ENCODE measurements at regions of chr10 and their contacts with region 1.

Region 1: DNA sequence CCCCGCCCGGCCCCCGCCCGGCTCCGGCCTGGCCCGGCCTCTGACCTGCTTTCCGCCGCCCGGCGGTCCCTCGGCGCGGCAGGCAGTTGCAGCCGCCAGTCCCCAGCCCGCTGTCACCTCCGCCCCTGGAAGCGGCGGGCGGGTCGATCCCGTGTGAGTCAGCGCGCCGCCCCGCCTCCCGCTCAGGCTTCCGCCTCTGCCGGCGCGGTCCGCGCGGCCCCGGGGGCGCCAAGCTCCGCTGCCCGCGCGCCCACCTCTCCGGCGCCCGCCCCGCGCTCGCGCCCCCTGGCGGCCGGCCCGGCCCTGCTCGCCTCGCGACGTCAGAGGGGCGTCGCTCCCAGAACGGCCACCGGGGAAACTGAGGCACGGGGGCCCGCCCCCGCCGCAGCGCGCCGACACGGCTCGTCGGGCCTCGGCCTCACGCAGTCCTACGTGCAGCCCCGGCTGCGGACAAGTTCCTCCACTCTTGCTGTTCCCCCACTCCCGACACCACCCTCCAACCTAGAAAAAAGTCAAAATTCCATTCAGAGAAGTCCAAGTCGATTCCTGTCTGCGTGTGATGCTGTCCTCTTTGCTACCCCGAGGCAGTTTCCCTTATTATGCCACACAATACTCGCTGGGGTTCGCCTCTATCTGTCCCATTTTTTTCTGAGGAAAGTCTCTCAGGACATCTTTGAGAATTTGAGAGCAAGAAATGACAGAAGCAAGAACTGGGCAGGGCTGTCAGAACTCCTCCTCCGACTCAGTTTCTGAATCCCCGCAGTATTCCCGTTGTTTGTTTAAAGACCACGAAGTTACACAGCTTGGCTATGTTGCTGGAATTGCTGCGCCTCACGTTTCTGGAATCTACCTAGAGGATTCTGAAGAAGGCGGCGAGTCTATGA is at the start of gene DNMBP:
- DNase-seq: peak; percentile 76
- H3K4me3 Mint-ChIP-seq: peak within 1 kb of the TSS; percentile 94
- H3K27ac Mint-ChIP-seq: peak within 1 kb of the TSS; percentile 84
- H3K4me1 Mint-ChIP-seq: peaks cover 39% of the 10 kb centered on the region
- H3K27me3 Mint-ChIP-seq: no peaks in the 10 kb centered on the region
- CTCF ChIP-seq: peak; percentile 32
- total RNA-seq, gene DNMBP: 11.3 and 14.3 TPM in 2 replicates

Region 2: DNA sequence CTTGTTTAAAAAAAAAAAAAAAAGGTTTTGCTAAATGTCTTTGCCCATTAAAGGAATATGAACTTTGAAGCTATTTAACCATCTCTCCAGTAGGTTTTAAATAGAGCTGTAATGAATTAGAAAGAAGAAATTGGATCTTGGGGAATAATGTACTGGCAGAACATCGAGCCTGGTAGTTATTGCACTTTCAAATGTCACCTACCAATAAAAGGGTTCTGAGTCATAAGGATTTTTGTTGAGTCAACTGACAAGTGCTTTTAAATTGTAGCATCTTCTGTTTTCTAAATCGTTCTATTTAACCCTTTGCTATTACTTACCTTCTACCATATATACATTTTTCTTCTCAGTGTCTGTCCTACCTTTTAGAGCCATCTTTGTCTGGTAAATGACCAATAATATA is 267.3 kb before region 1 on chr10:
- CTCF ChIA-PET with region 1: no interaction called
- POLR2A ChIA-PET with region 1: no interaction called
- intact Hi-C with region 1: no loop called
- DNase-seq: peak; percentile 14
- H3K4me3 Mint-ChIP-seq: no peak overlapping the region
- H3K27ac Mint-ChIP-seq: peak overlapping the region; percentile 70
- H3K4me1 Mint-ChIP-seq: peaks cover 15% of the 10 kb centered on the region
- H3K27me3 Mint-ChIP-seq: no peaks in the 10 kb centered on the region
- CTCF ChIP-seq: no peak

Region 3: GRCh38 chr10:99920901-99921300 is 89.1 kb before region 1 on chr10:
- CTCF ChIA-PET with region 1: no interaction called
- POLR2A ChIA-PET with region 1: interaction called, 4 read pairs
- intact Hi-C with region 1: loop called (anchors 5 kb)
- DNase-seq: peak; percentile 83
- H3K4me3 Mint-ChIP-seq: no peak overlapping the region
- H3K27ac Mint-ChIP-seq: peak overlapping the region; percentile 85
- H3K4me1 Mint-ChIP-seq: peaks cover 38% of the 10 kb centered on the region
- H3K27me3 Mint-ChIP-seq: no peaks in the 10 kb centered on the region
- CTCF ChIP-seq: no peak

Region 4: DNA sequence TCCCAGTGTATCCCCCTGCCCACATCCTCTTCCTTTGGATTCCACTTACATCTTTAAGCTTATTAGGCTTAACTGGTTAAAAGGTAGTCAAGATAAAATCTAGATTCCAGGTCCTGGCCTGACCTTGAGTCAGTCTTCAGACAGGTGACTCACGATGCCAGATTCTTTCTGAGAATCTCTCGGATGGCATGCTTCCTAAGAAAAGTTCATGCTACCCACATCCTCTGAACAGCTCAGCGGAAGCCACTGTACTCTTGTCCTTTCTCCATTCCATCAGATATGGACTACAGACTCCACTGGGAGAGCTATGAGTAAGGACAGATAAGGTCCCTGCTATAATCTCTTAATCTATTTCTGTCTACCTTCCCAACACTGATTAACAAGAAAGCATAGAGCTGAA is 43.7 kb before region 1 on chr10:
- CTCF ChIA-PET with region 1: interaction called, 4 read pairs
- POLR2A ChIA-PET with region 1: interaction called, 53 read pairs
- intact Hi-C with region 1: loop called (anchors 5 kb)
- DNase-seq: peak; percentile 78
- H3K4me3 Mint-ChIP-seq: no peak overlapping the region
- H3K27ac Mint-ChIP-seq: peak overlapping the region; percentile 49
- H3K4me1 Mint-ChIP-seq: peaks cover 12% of the 10 kb centered on the region
- H3K27me3 Mint-ChIP-seq: no peaks in the 10 kb centered on the region
- CTCF ChIP-seq: no peak

Region 5: GRCh38 chr10:99983280-99983988 is 26.6 kb before region 1 on chr10:
- CTCF ChIA-PET with region 1: interaction called, 55 read pairs
- POLR2A ChIA-PET with region 1: interaction called, 547 read pairs
- intact Hi-C with region 1: no loop called
- DNase-seq: no peak
- H3K4me3 Mint-ChIP-seq: no peak overlapping the region
- H3K27ac Mint-ChIP-seq: peak overlapping the region; percentile 85
- H3K4me1 Mint-ChIP-seq: peaks cover 23% of the 10 kb centered on the region
- H3K27me3 Mint-ChIP-seq: no peaks in the 10 kb centered on the region
- CTCF ChIP-seq: no peak

Region 6: GRCh38 chr10:100020142-100020885 is 10.3 kb after region 1 on chr10:
- CTCF ChIA-PET with region 1: interaction called, 10 read pairs
- POLR2A ChIA-PET with region 1: interaction called, 4 read pairs
- intact Hi-C with region 1: no loop called
- DNase-seq: no peak
- H3K4me3 Mint-ChIP-seq: no peak overlapping the region
- H3K27ac Mint-ChIP-seq: no peak overlapping the region
- H3K4me1 Mint-ChIP-seq: no peaks in the 10 kb centered on the region
- H3K27me3 Mint-ChIP-seq: no peaks in the 10 kb centered on the region
- CTCF ChIP-seq: no peak